GM12878 (cell line): ENCODE measurements at regions of chr10 and their contacts with region 1.

Region 1: DNA sequence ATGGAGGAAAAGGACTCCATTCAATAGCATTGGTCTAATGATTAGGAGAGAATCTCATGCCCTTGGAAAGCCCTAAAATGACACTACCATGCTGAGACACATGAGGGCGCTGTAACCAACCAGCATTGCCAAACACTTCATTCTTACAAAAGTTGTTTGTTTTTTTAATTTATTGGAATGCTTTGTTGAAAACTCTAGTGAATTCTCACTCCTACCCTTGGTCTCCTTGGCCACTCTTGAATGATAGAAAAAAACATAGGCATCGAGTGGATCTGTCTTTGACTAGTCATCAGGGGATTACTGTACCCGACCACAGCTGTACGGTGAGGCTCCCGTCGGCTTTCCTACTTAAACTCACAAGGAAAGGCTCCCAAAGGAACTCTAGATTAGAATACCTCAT is 29.3 kb upstream of the ADD3 start:
- DNase-seq: no peak
- ATAC-seq: peak; percentile 77
- H3K4me3 ChIP-seq: no peak overlapping the region
- H3K27ac ChIP-seq: no peak overlapping the region
- H3K4me1 ChIP-seq: no peaks in the 10 kb centered on the region
- H3K27me3 ChIP-seq: peaks cover 0 to 2% of the 10 kb centered on the region in 2 experiments; a peak in 1 of 4 replicates
- CTCF ChIP-seq: peak; percentile 74 to 86 (median 81)
- EP300 ChIP-seq: no peak
- POLR2A ChIP-seq: no peak
- RAD21 ChIP-seq: peak; percentile 82

Region 2: DNA sequence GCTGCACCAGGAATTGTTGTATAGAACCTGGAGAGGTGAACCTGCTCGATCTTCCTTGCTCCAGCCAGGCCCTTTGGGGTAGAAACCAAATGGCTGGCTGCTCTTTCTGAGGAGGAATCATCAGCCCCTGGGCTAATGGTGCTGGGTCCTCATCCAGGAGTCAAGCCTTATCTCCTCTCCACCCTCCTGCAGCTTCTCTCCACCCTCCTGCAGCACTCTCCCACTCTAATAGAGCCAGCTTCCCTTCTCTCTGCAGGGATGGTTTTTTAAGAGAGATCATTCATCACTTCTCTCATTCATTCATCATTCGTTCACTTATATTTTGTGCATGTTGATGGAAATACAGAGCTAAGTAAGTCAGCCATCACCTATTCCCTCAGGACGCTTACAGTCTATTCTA is 158.7 kb before region 1 on chr10:
- CTCF ChIA-PET with region 1: no interaction called
- POLR2A ChIA-PET with region 1: no interaction called
- RAD21 ChIA-PET with region 1: no interaction called
- SMC1A ChIA-PET with region 1: no interaction called
- in situ Hi-C with region 1: no loop called
- intact Hi-C with region 1: no loop called
- DNase-seq: no peak
- ATAC-seq: no peak
- H3K4me3 ChIP-seq: no peak overlapping the region
- H3K27ac ChIP-seq: no peak overlapping the region
- H3K4me1 ChIP-seq: no peaks in the 10 kb centered on the region
- H3K27me3 ChIP-seq: no peaks in the 10 kb centered on the region
- CTCF ChIP-seq: no peak
- EP300 ChIP-seq: no peak
- POLR2A ChIP-seq: no peak
- RAD21 ChIP-seq: no peak

Region 3: GRCh38 chr10:109956454-109957091 is 21.9 kb before region 1 on chr10:
- CTCF ChIA-PET with region 1: interaction called, 26 read pairs
- POLR2A ChIA-PET with region 1: no interaction called
- RAD21 ChIA-PET with region 1: no interaction called
- SMC1A ChIA-PET with region 1: interaction called, 11 read pairs
- in situ Hi-C with region 1: no loop called
- intact Hi-C with region 1: no loop called
- DNase-seq: no peak
- ATAC-seq: peak; percentile 87
- H3K4me3 ChIP-seq: no peak overlapping the region
- H3K27ac ChIP-seq: peak overlapping the region; percentile 55
- H3K4me1 ChIP-seq: peaks cover 23% of the 10 kb centered on the region
- H3K27me3 ChIP-seq: no peaks in the 10 kb centered on the region
- CTCF ChIP-seq: peak; percentile 57 to 76 (median 67)
- EP300 ChIP-seq: no peak
- POLR2A ChIP-seq: no peak
- RAD21 ChIP-seq: peak; percentile 58

Region 4: DNA sequence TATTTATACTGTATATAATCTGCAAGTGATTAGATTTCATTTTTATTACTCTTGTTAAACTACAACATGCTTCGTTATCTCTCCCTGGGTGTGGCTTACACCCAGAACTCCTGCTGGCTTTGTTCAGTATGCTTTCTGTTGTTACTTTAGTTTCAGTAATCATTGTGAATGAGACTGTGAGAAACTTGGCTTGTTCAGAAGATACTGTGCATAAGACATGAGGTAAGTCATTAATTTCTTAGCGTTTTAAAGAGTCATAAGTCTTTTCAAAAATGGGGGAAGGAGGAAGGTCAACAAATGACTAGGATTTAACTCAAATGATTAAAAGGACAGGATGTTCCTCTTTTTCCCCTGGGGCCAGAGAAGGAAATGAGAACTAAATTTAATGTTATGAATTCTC is 17.7 kb after region 1 on chr10:
- CTCF ChIA-PET with region 1: interaction called, 54 read pairs
- POLR2A ChIA-PET with region 1: interaction called, 8 read pairs
- RAD21 ChIA-PET with region 1: interaction called, 5 read pairs
- SMC1A ChIA-PET with region 1: interaction called, 13 read pairs
- in situ Hi-C with region 1: no loop called
- intact Hi-C with region 1: no loop called
- DNase-seq: no peak
- ATAC-seq: peak; percentile 87
- H3K4me3 ChIP-seq: no peak overlapping the region
- H3K27ac ChIP-seq: peak overlapping the region; percentile 32; the same call in 1 of the 2 replicates
- H3K4me1 ChIP-seq: peaks cover 14% of the 10 kb centered on the region
- H3K27me3 ChIP-seq: no peaks in the 10 kb centered on the region
- CTCF ChIP-seq: no peak
- EP300 ChIP-seq: no peak
- POLR2A ChIP-seq: no peak
- RAD21 ChIP-seq: no peak

Region 5: DNA sequence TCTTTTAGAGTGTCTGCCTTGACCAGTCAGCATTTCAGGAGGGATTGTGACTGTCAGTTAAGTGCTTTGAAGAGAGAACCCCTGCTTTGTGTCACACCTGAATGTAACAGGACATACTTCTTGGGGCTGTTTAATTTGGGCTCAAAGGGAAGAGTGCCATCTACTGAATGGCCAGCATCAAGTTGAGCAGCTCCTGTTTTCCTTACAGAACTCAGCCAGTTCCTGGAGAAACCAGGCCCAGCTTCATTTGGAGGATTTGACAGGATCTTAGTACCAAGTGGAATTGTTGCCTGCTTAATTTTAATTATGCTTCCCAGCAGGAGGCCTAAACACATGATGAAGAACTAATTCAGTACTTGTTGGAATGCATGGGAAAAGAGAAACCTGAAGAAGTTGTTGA is 37.6 kb after region 1 on chr10:
- CTCF ChIA-PET with region 1: interaction called, 97 read pairs
- POLR2A ChIA-PET with region 1: no interaction called
- RAD21 ChIA-PET with region 1: interaction called, 48 read pairs
- SMC1A ChIA-PET with region 1: interaction called, 42 read pairs
- in situ Hi-C with region 1: no loop called
- intact Hi-C with region 1: loop called (anchors 5 kb)
- DNase-seq: no peak
- ATAC-seq: peak; percentile 65
- H3K4me3 ChIP-seq: no peak overlapping the region
- H3K27ac ChIP-seq: no peak overlapping the region
- H3K4me1 ChIP-seq: peaks cover 14% of the 10 kb centered on the region
- H3K27me3 ChIP-seq: no peaks in the 10 kb centered on the region
- CTCF ChIP-seq: peak; percentile 14 to 59 (median 33); a peak in 2 of 6 replicates
- EP300 ChIP-seq: no peak
- POLR2A ChIP-seq: no peak
- RAD21 ChIP-seq: peak; percentile 46

Region 6: GRCh38 chr10:110076559-110077318 is 98.3 kb after region 1 on chr10:
- CTCF ChIA-PET with region 1: interaction called, 7 read pairs
- POLR2A ChIA-PET with region 1: no interaction called
- RAD21 ChIA-PET with region 1: interaction called, 12 read pairs
- SMC1A ChIA-PET with region 1: interaction called, 6 read pairs
- in situ Hi-C with region 1: no loop called
- intact Hi-C with region 1: no loop called
- DNase-seq: peak; percentile 76
- ATAC-seq: peak; percentile 83
- H3K4me3 ChIP-seq: peak overlapping the region; percentile 43
- H3K27ac ChIP-seq: peak overlapping the region; percentile 87
- H3K4me1 ChIP-seq: peaks cover 34% of the 10 kb centered on the region
- H3K27me3 ChIP-seq: no peaks in the 10 kb centered on the region
- CTCF ChIP-seq: no peak
- EP300 ChIP-seq: peak; percentile 26 to 46; a peak in 1 of 4 replicates
- POLR2A ChIP-seq: no peak
- RAD21 ChIP-seq: peak; percentile 11; the same call in 1 of the 2 replicates

Region 7: GRCh38 chr10:110285501-110285900 is 307.0 kb after region 1 on chr10:
- CTCF ChIA-PET with region 1: interaction called, 10 read pairs
- POLR2A ChIA-PET with region 1: no interaction called
- RAD21 ChIA-PET with region 1: interaction called, 3 read pairs
- SMC1A ChIA-PET with region 1: no interaction called
- in situ Hi-C with region 1: no loop called
- intact Hi-C with region 1: no loop called
- DNase-seq: no peak
- ATAC-seq: no peak; the same call in 2 of the 3 replicates
- H3K4me3 ChIP-seq: no peak overlapping the region
- H3K27ac ChIP-seq: no peak overlapping the region
- H3K4me1 ChIP-seq: no peaks in the 10 kb centered on the region
- H3K27me3 ChIP-seq: no peaks in the 10 kb centered on the region
- CTCF ChIP-seq: no peak
- EP300 ChIP-seq: no peak
- POLR2A ChIP-seq: no peak
- RAD21 ChIP-seq: no peak